ENCODE measurements at regions of chr2 and their contacts with region 1.

Region 1: DNA sequence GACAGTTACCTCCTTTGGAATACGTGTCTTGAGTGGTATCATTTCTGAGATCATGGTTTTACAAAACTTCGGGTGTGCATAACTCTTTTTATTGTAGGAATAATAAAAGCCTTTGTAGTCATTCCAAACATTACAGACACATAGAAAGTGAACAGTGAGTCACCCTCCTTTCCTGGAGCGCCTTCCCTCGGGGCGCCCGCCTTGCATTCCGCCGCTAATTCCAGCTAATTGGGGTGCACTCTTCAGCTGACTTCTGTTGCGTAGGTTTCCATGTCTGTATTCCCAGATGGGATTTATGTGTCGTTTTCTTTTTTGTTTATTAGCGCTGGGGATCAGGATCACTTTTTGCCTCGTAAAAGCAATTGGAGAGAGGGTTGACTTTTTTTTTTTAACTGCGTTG is 18.6 kb downstream of the SH3BP4 start:
- DNase-seq: peak; percentile 82
- H3K4me3 ChIP-seq: no peak overlapping the region
- H3K27ac ChIP-seq: peak overlapping the region; percentile 84
- H3K4me1 ChIP-seq: peaks cover 41% of the 10 kb centered on the region
- H3K27me3 ChIP-seq: no peaks in the 10 kb centered on the region
- CTCF ChIP-seq: no peak
- POLR2A ChIP-seq: no peak

Region 2: GRCh38 chr2:234960175-234961088 is 10.0 kb before region 1 on chr2:
- CTCF ChIA-PET with region 1: interaction called, 8 read pairs
- POLR2A ChIA-PET with region 1: interaction called, 3 read pairs
- dilution Hi-C with region 1: no loop called
- intact Hi-C with region 1: loop called (anchors 1 kb)
- DNase-seq: peak; percentile 87
- H3K4me3 ChIP-seq: no peak overlapping the region
- H3K27ac ChIP-seq: peak overlapping the region; percentile 87
- H3K4me1 ChIP-seq: peaks cover 23% of the 10 kb centered on the region
- H3K27me3 ChIP-seq: no peaks in the 10 kb centered on the region
- CTCF ChIP-seq: no peak
- POLR2A ChIP-seq: no peak

Region 3: GRCh38 chr2:235043762-235044565 is 73.5 kb after region 1 on chr2:
- CTCF ChIA-PET with region 1: no interaction called
- POLR2A ChIA-PET with region 1: no interaction called
- dilution Hi-C with region 1: no loop called
- intact Hi-C with region 1: no loop called
- DNase-seq: no peak
- H3K4me3 ChIP-seq: no peak overlapping the region
- H3K27ac ChIP-seq: no peak overlapping the region
- H3K4me1 ChIP-seq: peaks cover 8% of the 10 kb centered on the region
- H3K27me3 ChIP-seq: no peaks in the 10 kb centered on the region
- CTCF ChIP-seq: no peak
- POLR2A ChIP-seq: no peak

Region 4: DNA sequence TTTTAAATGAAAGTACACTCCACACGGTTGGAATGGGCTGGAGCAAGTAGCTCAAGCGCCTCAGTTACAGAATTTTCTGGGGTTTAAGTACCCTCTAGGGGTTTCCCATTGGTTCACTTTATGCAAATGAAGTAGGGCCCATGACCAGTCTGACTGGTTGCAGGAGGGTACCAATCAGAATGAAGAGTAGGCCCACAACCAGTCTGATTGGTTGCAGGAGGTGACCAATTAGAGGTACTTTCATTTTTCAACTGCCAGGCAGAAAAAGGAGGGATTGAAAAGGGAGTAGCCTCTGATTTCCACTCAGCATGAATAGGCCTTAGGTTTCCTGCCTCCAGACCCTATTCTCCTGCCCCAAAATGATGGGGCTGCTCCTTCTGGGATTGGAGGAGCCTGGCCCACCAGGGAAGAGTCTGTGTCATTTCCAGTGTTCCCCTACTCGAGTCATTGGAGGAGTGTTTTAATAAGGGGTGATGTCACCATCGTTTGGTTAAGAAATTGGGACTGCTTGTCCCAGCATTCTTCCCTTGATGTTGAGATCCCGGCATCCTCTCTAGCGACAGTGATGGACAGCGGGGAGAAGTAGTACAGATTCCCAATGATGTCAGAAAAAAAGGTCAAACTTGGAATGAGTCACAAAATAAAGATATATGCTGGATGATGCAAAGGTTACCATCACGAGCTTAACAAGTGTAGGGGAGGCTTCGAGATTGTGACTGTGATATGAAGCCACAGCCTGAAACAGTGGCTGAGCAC is 191.8 kb after region 1 on chr2:
- CTCF ChIA-PET with region 1: no interaction called
- POLR2A ChIA-PET with region 1: no interaction called
- dilution Hi-C with region 1: no loop called
- intact Hi-C with region 1: no loop called
- DNase-seq: no peak
- H3K4me3 ChIP-seq: no peak overlapping the region
- H3K27ac ChIP-seq: no peak overlapping the region
- H3K4me1 ChIP-seq: no peaks in the 10 kb centered on the region
- H3K27me3 ChIP-seq: no peaks in the 10 kb centered on the region
- CTCF ChIP-seq: no peak
- POLR2A ChIP-seq: no peak